A673 (cell line): ENCODE measurements at regions of chr18 and their contacts with region 1.

Region 1: GRCh38 chr18:31722369-31722957 is 38.1 kb upstream of the B4GALT6 start:
- DNase-seq: peak; percentile 84
- H3K4me3 ChIP-seq: no peak overlapping the region
- H3K27ac ChIP-seq: no peak overlapping the region
- H3K4me1 ChIP-seq: no peaks in the 10 kb centered on the region
- H3K27me3 ChIP-seq: peaks cover 38% of the 10 kb centered on the region
- CTCF ChIP-seq: peak; percentile 86

Region 2: DNA sequence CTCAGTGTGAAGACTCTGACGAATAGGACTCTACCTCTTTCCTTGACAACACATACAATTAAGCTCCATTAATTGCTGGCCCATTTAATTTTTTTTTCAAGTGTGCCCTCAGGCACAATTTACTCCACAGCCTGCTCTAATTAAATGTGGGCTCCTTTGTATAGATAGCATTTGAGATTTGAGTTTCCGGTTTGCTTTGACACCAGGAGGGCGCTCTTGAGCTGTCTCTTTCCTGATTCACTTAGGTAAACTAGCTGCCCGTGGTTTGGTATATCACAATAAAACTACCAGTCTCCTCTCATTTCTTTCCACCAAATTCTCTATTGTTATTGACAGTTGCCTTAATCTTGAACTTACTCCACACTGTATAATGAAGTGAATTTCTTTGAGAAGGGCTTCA is 1345.9 kb before region 1 on chr18:
- CTCF ChIA-PET with region 1: no interaction called
- POLR2A ChIA-PET with region 1: no interaction called
- intact Hi-C with region 1: no loop called
- DNase-seq: peak; percentile 33
- H3K4me3 ChIP-seq: no peak overlapping the region
- H3K27ac ChIP-seq: no peak overlapping the region
- H3K4me1 ChIP-seq: no peaks in the 10 kb centered on the region
- H3K27me3 ChIP-seq: no peaks in the 10 kb centered on the region
- CTCF ChIP-seq: peak; percentile 48

Region 3: GRCh38 chr18:31424383-31424988 is 298.0 kb before region 1 on chr18:
- CTCF ChIA-PET with region 1: no interaction called
- POLR2A ChIA-PET with region 1: no interaction called
- intact Hi-C with region 1: loop called (anchors 10 kb)
- DNase-seq: peak; percentile 51
- H3K4me3 ChIP-seq: no peak overlapping the region
- H3K27ac ChIP-seq: no peak overlapping the region
- H3K4me1 ChIP-seq: no peaks in the 10 kb centered on the region
- H3K27me3 ChIP-seq: peaks cover 6% of the 10 kb centered on the region
- CTCF ChIP-seq: peak; percentile 76